ENCODE measurements at regions of chr7 and their contacts with region 1.

Region 1: GRCh38 chr7:3154912-3155494 is 111.3 kb upstream of the CARD11 start:
- DNase-seq: no peak
- ATAC-seq: no peak
- H3K4me3 ChIP-seq: no peak overlapping the region
- H3K27ac ChIP-seq: no peak overlapping the region
- H3K4me1 ChIP-seq: no peaks in the 10 kb centered on the region
- H3K27me3 ChIP-seq: peaks cover 0 to 9% (median 0%) of the 10 kb centered on the region in 9 donors
- CTCF ChIP-seq: peak; percentile 31 to 68 (median 49)
- POLR2A ChIP-seq: no peak

Region 2: GRCh38 chr7:2670720-2671391 is 484.1 kb before region 1 on chr7:
- intact Hi-C with region 1: loop called in 2 of 10 experiments (anchors 5 to 10 kb)
- DNase-seq: peak; percentile 65 to 87 (median 74)
- ATAC-seq: peak; percentile 55 to 85 (median 75)
- H3K4me3 ChIP-seq: no peak overlapping the region
- H3K27ac ChIP-seq: no peak overlapping the region
- H3K4me1 ChIP-seq: peaks cover 0 to 7% (median 1%) of the 10 kb centered on the region in 12 donors
- H3K27me3 ChIP-seq: peaks cover 0 to 7% (median 0%) of the 10 kb centered on the region in 9 donors
- CTCF ChIP-seq: peak; percentile 73 to 90 (median 82)
- POLR2A ChIP-seq: no peak